CD8-positive, alpha-beta memory T cell (primary cell): ENCODE measurements at regions of chr3 and their contacts with region 1.

Region 1: GRCh38 chr3:185971579-185971978 is 33.8 kb upstream of the TRA2B start:
- DNase-seq: no peak
- H3K4me3 ChIP-seq: no peak overlapping the region
- H3K4me3 Mint-ChIP-seq: no peak overlapping the region
- H3K27ac ChIP-seq: no peak overlapping the region
- H3K27ac Mint-ChIP-seq: no peak overlapping the region
- H3K4me1 ChIP-seq: no peaks in the 10 kb centered on the region
- H3K4me1 Mint-ChIP-seq: no peaks in the 10 kb centered on the region
- H3K27me3 ChIP-seq: no peaks in the 10 kb centered on the region
- H3K27me3 Mint-ChIP-seq: no peaks in the 10 kb centered on the region

Region 2: DNA sequence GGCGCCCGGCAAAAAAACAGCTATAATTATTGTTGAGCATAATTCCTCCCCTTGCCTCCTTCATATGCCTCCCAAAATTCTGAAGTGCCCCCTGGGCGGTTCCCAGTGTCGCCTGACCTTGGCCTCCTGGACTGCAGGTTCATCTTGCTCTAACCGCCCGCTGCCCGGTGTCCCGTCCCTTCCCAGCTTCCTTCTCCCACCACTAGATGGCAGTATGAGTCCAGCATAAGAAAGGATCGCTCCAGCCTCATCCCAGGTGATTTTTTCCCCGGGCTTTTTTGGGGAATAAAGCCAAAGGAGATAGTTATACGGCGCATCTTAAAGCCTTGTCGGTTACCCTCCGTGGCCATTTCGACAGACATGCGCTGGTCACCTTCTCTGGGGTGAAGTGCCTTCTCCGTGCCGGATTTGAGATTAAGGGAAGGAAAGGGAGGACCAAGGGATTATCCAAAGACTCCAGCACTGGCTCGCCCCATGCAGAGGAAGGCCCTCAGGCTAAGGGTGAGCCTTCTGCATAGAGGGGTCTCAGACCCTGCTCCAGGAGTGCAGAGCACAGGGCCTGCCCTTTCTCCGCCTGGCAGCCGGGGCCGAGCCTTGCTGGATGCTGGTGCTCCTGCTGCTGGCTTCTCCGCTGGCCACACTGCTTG is 12.0 kb after region 1 on chr3:
- CTCF ChIA-PET with region 1: interaction called, 15 read pairs
- POLR2A ChIA-PET with region 1: no interaction called
- DNase-seq: peak; percentile 32 to 67 (median 46)
- H3K4me3 ChIP-seq: no peak overlapping the region
- H3K4me3 Mint-ChIP-seq: no peak overlapping the region
- H3K27ac ChIP-seq: no peak overlapping the region
- H3K27ac Mint-ChIP-seq: no peak overlapping the region
- H3K4me1 ChIP-seq: peaks cover 7% of the 10 kb centered on the region
- H3K4me1 Mint-ChIP-seq: peaks cover 0 to 5% (median 4%) of the 10 kb centered on the region in 3 donors
- H3K27me3 ChIP-seq: no peaks in the 10 kb centered on the region
- H3K27me3 Mint-ChIP-seq: peaks cover 4 to 5% of the 10 kb centered on the region in 2 donors